ENCODE measurements at regions of chr1 and their contacts with region 1.

Region 1: DNA sequence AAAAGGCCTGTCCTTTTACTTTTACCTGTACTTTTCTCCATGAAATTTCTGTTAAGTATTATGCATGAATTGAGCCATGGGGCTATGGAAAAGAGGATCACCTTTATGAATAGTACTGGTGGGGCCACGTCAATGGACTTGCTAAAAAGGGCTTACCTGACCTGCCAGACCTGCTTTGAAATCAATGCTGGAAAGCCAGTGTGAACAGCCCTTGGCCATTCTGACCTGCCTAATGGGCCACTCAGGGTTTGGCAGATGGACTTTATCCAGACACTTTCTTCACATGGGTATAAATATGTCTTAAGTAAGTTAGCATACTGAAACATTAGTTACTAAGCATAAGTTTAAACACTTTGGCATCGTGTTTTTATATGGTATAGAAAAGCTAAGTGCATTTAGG is 8.3 kb upstream of the GUK1 start:
- DNase-seq: no peak
- ATAC-seq: no peak
- H3K4me3 ChIP-seq: no peak overlapping the region; a peak in 1 of 6 replicates
- H3K27ac ChIP-seq: no peak overlapping the region
- H3K4me1 ChIP-seq: 0 out of 2 replicates have a peak, but pooled peaks cover 4% of the 10 kb centered on the region
- H3K27me3 ChIP-seq: peaks cover 0 to 8% of the 10 kb centered on the region in 2 experiments; a peak in 2 of 5 replicates
- CTCF ChIP-seq: no peak
- EP300 ChIP-seq: no peak
- POLR2A ChIP-seq: no peak
- RAD21 ChIP-seq: no peak

Region 2: DNA sequence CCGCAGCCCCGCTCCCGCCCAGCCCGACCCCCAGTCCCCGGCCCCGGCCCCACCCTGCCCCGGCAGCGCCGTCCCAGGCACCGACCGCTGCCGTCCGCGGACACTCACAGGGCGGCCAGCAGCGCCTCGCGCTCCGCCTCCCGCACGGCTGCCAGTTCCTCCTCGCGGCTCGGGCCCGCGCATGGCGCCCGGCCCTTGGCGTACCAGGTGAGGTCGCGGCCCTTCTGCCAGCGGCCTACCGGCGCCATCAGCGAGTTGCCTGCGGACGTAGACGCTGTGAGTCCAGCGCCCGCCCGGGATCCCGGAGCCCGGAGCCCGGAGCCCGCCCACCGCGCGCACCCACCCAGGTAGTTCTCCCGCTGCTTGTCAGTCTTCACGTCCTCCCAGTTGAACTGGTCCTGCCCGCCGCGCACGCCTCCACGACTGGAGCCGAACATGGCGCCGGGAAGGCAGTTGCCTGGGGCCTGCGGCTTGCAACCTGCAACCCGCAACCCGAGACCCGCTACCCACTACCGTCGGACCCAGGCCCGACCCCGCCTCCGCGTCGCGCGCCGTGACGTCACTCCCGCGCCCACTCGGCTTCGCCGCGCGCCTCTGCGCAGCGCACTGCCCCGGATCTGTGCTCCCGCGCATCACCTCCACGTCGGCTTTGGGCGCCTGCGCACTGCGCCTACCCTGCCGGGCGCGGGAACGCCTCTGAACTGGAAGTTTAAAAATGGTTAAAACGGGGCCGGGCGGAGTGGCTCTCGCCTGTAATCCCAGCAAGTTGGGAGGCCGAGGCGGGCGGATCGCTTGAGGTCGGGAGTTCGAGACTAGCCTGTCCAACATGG is 28.8 kb before region 1 on chr1 and contains the start of gene C1orf35:
- CTCF ChIA-PET with region 1: no interaction called
- POLR2A ChIA-PET with region 1: no interaction called
- in situ Hi-C with region 1: no loop called
- intact Hi-C with region 1: no loop called
- DNase-seq: peak; percentile 83
- ATAC-seq: peak; percentile 68
- H3K4me3 ChIP-seq: peak within 1 kb of the TSS; percentile 82 to 93 (median 92)
- H3K27ac ChIP-seq: peak within 1 kb of the TSS; percentile 80
- H3K4me1 ChIP-seq: peaks cover 35% of the 10 kb centered on the region
- H3K27me3 ChIP-seq: no peaks in the 10 kb centered on the region; a peak in 1 of 5 replicates
- CTCF ChIP-seq: peak; percentile 28; the same call in 1 of the 2 replicates
- EP300 ChIP-seq: no peak; a peak in 1 of 4 replicates
- POLR2A ChIP-seq: peak in 1 of 2 experiments; percentile 59; a peak in 1 of 4 replicates
- RAD21 ChIP-seq: 0 out of 2 replicates have a peak, but pooled peaks have one; percentile 28
- total RNA-seq, gene C1orf35: 14.2 and 19.3 TPM in 2 replicates

Region 3: DNA sequence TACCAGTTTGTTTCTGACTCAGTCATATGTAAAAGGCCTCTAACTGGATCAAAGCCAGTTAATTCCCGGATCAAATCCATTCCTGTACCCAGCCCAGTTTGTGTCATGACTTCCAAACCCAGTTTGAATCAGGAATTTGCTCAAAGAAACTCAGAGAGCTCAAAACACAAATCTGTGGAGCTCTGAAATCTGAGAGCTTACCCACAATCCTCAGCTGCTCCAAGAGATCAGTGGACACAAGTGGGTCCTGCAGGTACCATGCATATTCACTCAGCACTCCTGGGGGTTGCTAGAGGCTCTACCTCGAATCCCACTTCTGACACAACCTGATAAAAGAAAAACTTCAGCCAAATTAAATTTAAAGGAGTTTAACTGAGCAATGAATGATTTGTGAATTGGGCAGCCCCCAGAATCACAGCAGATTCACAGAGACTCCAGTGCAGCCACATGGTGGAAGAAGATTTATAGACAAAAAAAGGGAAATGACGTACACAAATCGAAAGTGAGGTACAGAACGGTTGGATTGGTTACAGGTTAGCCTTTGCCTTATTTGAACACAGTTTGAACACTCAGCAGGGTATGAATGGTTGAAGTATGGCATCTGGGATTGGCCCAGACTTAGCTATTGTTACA is 10.8 kb before region 1 on chr1:
- CTCF ChIA-PET with region 1: no interaction called
- POLR2A ChIA-PET with region 1: no interaction called
- in situ Hi-C with region 1: no loop called
- intact Hi-C with region 1: no loop called
- DNase-seq: no peak
- ATAC-seq: no peak
- H3K4me3 ChIP-seq: no peak overlapping the region
- H3K27ac ChIP-seq: no peak overlapping the region
- H3K4me1 ChIP-seq: peaks cover 14% of the 10 kb centered on the region
- H3K27me3 ChIP-seq: no peaks in the 10 kb centered on the region
- CTCF ChIP-seq: no peak
- EP300 ChIP-seq: no peak
- POLR2A ChIP-seq: no peak
- RAD21 ChIP-seq: no peak

Region 4: DNA sequence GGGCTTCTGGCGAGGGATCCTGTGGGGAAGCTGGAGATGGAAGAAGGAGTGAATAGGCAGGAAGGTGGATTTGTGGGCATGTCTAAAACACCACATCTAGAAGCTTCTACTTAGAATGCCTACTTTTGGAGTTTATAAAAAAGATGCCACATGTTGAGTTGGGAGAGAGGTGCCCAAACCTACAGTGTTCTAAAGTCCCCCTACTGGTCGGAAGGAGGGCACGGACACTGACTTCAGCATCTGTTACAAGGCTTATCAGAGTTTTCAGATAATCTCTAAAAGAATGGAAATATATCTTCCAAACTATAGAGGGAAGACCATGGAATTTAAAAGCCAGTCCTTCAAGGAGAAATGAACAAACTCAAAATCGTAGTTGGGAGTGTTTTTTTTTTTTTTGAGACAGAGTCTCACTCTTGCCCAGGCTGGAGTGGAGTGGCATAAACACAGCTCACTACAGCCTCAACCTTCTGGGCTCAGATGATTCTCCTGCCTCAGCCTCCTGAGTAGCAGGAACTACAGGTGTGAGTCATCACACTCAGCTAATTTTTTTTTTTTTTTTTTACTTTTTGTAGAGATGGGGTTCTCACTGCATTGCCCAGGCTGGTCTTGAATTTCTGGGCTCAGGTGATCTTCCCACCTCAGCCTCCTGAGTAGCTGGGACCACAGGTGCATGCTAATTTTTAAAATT is 48.6 kb after region 1 on chr1:
- CTCF ChIA-PET with region 1: interaction called, 6 read pairs
- POLR2A ChIA-PET with region 1: no interaction called
- in situ Hi-C with region 1: loop called (anchors 5 kb)
- intact Hi-C with region 1: loop called (anchors 2 kb)
- DNase-seq: peak; percentile 25
- ATAC-seq: peak; percentile 66
- H3K4me3 ChIP-seq: no peak overlapping the region
- H3K27ac ChIP-seq: no peak overlapping the region
- H3K4me1 ChIP-seq: peaks cover 7% of the 10 kb centered on the region
- H3K27me3 ChIP-seq: no peaks in the 10 kb centered on the region; a peak in 1 of 5 replicates
- CTCF ChIP-seq: peak; percentile 36; the same call in 1 of the 2 replicates
- EP300 ChIP-seq: no peak
- POLR2A ChIP-seq: no peak
- RAD21 ChIP-seq: no peak

Region 5: GRCh38 chr1:228190778-228191177 is 59.0 kb after region 1 on chr1:
- CTCF ChIA-PET with region 1: interaction called, 12 read pairs
- POLR2A ChIA-PET with region 1: no interaction called
- in situ Hi-C with region 1: no loop called
- intact Hi-C with region 1: loop called (anchors 1 kb)
- DNase-seq: no peak
- ATAC-seq: no peak
- H3K4me3 ChIP-seq: no peak overlapping the region
- H3K27ac ChIP-seq: no peak overlapping the region
- H3K4me1 ChIP-seq: no peaks in the 10 kb centered on the region
- H3K27me3 ChIP-seq: no peaks in the 10 kb centered on the region; a peak in 1 of 5 replicates
- CTCF ChIP-seq: no peak
- EP300 ChIP-seq: no peak
- POLR2A ChIP-seq: no peak
- RAD21 ChIP-seq: no peak